ENCODE measurements at regions of chr14 and their contacts with region 1.

Region 1: GRCh38 chr14:71320107-71320733 is 413.0 kb downstream of the PCNX1 start:
- DNase-seq: peak; percentile 96
- ATAC-seq: peak; percentile 84
- H3K4me3 Mint-ChIP-seq: peak within 1 kb of the TSS; percentile 84
- H3K27ac Mint-ChIP-seq: peak within 1 kb of the TSS; percentile 89
- H3K4me1 Mint-ChIP-seq: peaks cover 39% of the 10 kb centered on the region
- H3K27me3 Mint-ChIP-seq: peaks cover 5% of the 10 kb centered on the region

Region 2: DNA sequence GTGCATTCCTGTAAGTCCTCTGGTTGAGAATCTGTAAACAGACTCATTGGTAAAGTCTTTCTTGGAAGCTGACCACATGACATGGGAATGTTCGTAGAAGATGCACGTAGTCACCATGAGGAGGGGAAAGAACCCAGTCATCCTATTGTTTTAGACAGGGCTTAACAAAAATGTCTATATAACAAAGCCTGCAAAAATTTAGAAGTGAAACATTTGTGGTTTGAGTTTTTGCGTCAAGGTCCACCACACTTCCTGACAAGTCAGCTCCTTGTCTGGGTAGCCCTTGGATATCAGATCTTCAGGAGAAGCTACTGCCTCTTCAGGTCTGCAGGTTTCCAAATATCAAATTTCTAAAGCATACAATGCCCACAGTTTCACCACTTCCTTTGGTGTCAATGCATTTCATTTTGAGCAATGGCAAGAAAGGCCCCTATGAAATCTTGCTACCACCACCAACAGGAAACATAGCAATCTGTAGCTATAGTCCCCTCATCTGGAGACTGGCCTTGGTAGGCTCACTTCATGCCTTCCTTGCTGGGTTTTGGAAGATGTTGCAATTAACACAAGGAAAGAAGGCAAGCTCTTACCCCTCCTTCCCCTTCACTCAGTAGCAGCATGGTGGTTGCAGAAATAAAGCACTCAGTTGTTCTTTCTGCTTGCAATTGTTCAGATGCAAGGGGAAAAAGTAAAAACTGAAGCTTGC is 177.7 kb before region 1 on chr14:
- POLR2A ChIA-PET with region 1: interaction called, 44 read pairs
- DNase-seq: no peak
- ATAC-seq: peak; percentile 62
- H3K4me3 Mint-ChIP-seq: peak overlapping the region; percentile 69
- H3K27ac Mint-ChIP-seq: peak overlapping the region; percentile 94
- H3K4me1 Mint-ChIP-seq: peaks cover 36% of the 10 kb centered on the region
- H3K27me3 Mint-ChIP-seq: no peaks in the 10 kb centered on the region

Region 3: DNA sequence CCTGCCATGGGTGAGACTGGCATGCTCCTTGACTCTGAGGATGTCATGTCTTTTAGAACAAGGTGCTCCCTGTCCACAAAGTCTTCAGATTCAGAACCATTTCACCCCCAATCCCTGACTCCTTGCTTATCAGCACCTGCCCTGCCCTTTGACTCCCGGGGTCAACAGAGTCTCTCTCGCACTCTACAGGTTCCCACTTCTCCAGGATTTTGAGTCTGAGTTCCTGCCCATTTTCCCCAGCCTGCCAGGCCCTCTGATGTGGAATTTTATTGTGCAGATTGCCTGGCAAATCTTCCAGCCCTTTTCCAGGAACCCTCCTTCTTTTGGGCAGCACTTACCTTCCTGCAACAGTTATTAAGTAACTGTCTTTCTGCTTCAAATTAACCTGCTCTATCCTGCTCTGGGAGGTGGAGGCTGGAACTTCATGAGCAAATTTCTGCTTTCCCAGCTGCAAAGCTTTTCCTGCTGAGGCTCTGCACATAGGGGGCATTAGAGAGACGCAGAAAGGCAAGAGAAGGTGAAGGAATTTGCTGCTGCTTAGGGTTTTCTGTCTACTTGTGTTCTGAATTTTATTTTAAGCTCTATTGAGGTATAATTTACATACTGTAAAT is 153.9 kb before region 1 on chr14:
- POLR2A ChIA-PET with region 1: interaction called, 12 read pairs
- DNase-seq: no peak
- ATAC-seq: peak; percentile 27
- H3K4me3 Mint-ChIP-seq: no peak overlapping the region
- H3K27ac Mint-ChIP-seq: no peak overlapping the region
- H3K4me1 Mint-ChIP-seq: peaks cover 28% of the 10 kb centered on the region
- H3K27me3 Mint-ChIP-seq: peaks cover 12% of the 10 kb centered on the region

Region 4: DNA sequence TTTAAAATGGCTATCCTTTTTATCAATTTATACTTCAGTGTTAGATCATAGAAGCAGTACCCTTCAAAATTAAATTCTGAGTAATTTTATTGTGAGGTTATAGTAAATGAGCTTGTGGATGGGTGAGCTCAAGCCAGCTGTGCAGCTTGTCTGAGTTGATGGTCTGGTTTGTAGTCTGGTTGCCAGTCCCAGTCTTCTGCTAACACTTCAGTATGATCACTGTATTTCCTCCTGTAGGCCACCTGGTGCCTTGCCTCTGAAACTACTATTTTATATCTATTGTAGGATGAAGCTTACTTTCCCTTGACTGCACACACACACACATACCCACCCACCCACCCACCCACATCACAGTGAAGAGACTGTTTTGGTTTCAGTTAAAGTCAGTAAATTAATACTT is 83.4 kb after region 1 on chr14:
- POLR2A ChIA-PET with region 1: interaction called, 22 read pairs
- DNase-seq: no peak
- ATAC-seq: peak; percentile 58
- H3K4me3 Mint-ChIP-seq: no peak overlapping the region
- H3K27ac Mint-ChIP-seq: no peak overlapping the region
- H3K4me1 Mint-ChIP-seq: peaks cover 28% of the 10 kb centered on the region
- H3K27me3 Mint-ChIP-seq: no peaks in the 10 kb centered on the region

Region 5: GRCh38 chr14:71555654-71556559 is 235.7 kb after region 1 on chr14:
- POLR2A ChIA-PET with region 1: interaction called, 10 read pairs
- DNase-seq: peak; percentile 37
- ATAC-seq: peak; percentile 92
- H3K4me3 Mint-ChIP-seq: peak overlapping the region; percentile 82
- H3K27ac Mint-ChIP-seq: peak overlapping the region; percentile 97
- H3K4me1 Mint-ChIP-seq: peaks cover 52% of the 10 kb centered on the region
- H3K27me3 Mint-ChIP-seq: no peaks in the 10 kb centered on the region